Activated CD8-positive, alpha-beta T cell treated with anti-CD3 and anti-CD28 coated beads, Interleukin-2, amount 10 ng/mL, durations not matched to agents 7 days and 5 days (primary cell): ENCODE measurements at regions of chr7 and their contacts with region 1.

Region 1: DNA sequence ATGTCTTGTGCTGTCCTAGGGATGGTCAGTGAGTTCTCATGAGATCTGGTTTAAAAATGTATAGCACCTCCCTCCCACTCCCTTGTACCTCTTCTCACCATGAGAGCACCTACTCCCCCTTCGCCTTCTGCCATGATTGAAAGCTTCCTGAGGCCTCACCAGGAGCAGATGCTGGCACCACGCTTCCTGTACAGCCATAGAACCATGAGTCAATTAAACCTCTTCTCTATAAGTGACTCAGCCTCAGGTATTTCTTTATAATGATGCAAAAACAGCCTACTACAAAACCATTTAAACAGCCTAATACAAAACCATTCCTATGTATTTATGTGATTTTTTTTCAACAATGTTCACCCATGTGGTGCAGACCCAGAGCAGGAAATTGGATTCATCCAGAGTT is 32.0 kb downstream of the KDM7A start:
- DNase-seq: no peak
- ATAC-seq: no peak
- H3K4me3 Mint-ChIP-seq: no peak overlapping the region
- H3K27ac Mint-ChIP-seq: no peak overlapping the region
- H3K4me1 Mint-ChIP-seq: no peaks in the 10 kb centered on the region
- H3K27me3 Mint-ChIP-seq: no peaks in the 10 kb centered on the region

Region 2: DNA sequence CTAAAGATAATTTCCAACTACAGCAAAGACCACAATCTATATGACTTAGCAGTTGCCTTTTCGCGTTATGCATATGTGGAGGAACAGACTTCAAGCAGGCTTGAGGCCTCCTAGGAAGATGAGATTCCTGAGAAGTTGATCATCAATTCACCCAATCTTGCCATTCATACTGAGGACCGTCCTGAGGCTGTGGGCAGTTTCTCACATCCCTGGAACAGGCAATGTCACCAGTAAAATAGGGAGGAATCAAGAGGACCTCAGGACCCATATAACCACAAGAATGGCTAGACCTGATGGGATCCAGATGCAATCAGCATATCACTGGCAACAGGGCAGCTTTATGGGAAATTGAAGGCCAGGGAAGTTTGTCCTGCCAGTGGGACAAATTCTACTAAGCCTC is 14.7 kb after region 1 on chr7:
- CTCF ChIA-PET with region 1: no interaction called
- POLR2A ChIA-PET with region 1: interaction called, 10 read pairs
- DNase-seq: no peak
- ATAC-seq: no peak
- H3K4me3 Mint-ChIP-seq: no peak overlapping the region
- H3K27ac Mint-ChIP-seq: no peak overlapping the region
- H3K4me1 Mint-ChIP-seq: peaks cover 35% of the 10 kb centered on the region
- H3K27me3 Mint-ChIP-seq: no peaks in the 10 kb centered on the region